Natural killer cell (primary cell): ENCODE measurements at regions of chr6 and their contacts with region 1.

Region 1: DNA sequence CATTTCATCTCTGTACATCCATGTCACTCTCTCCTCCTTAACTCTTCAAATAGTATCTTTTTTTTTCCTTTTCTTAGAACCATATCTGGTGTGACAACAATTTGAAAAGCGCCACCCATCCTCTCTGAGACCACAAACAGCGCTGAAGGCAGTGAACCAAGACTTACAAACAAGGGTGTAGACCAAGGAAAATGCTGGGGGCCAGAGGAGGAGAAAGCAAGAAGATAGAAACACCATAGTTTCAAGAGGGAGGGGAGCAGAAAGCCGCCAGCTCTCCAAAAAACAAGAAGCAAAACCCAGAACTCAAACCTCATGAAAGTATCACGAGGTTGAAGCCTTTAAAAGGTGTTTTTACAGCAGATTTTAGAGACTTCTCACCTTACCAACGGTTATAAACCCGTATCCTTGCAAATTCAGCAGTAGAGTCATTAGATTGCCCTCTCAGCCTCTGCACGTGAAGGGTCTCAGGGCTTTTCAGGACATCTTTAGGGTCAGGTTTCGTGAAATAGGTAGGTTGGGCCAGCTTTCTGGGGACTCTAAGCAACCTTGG is 13.3 kb upstream of the RIPOR2 start:
- DNase-seq: peak in 1 of 2 donors; percentile 81
- ATAC-seq: peak; percentile 53 to 68 (median 67)
- H3K4me3 ChIP-seq: no peak overlapping the region
- H3K4me3 Mint-ChIP-seq: peak overlapping the region; percentile 83
- H3K27ac ChIP-seq: peak overlapping the region; percentile 80
- H3K27ac Mint-ChIP-seq: peak overlapping the region; percentile 94
- H3K4me1 ChIP-seq: peaks cover 68% of the 10 kb centered on the region
- H3K4me1 Mint-ChIP-seq: peaks cover 76 to 84% of the 10 kb centered on the region in 2 donors
- H3K27me3 ChIP-seq: no peaks in the 10 kb centered on the region
- H3K27me3 Mint-ChIP-seq: no peaks in the 10 kb centered on the region
- CTCF ChIP-seq: no peak

Region 2: DNA sequence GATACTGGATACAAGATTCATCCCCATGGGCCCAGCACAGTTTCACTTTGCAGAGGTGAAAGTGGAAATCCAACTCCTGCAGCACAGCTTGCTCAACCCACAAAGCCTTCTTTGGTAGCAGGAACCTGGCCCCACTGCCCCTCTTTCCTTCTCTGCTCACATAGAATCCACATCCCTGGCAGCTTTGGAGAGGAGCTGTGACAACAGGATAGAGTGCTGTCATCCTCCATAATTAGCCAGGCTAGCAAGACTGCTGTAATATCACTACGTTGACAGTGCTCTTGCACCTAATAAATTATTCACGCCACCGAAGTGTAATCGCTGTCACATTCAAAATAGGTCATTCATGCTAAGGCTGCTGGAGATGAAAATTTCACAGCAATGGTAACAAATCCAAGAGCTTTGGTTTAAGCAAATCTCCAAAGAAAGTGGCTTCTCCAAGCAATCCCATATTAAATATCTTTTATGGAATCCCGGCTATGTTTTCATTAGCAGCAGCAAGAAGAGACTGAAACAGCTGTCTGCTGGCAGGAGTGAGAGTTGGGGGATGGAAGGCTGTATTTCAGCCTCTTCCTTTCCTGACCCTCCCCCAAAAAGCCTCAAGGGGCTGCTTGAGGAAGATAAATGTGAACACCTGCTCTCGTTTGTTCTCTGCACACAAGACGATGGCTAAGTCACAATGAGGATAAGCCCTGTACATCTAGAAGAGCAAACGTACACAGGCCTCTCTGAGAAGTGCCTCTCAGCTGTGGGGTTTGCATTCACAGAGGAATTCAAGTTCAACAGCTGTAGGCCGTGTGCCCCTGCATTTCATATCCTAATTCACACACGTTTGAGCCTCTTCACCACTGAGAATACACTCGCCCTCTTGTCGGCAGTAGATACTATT is 29.8 kb before region 1 on chr6:
- intact Hi-C with region 1: loop called (anchors 5 kb)
- DNase-seq: peak in 1 of 2 donors; percentile 46
- ATAC-seq: peak; percentile 59 to 69 (median 60)
- H3K4me3 ChIP-seq: no peak overlapping the region
- H3K4me3 Mint-ChIP-seq: peak overlapping the region; percentile 83
- H3K27ac ChIP-seq: peak overlapping the region; percentile 45
- H3K27ac Mint-ChIP-seq: peak overlapping the region; percentile 89 to 93
- H3K4me1 ChIP-seq: peaks cover 81% of the 10 kb centered on the region
- H3K4me1 Mint-ChIP-seq: peaks cover 85 to 88% of the 10 kb centered on the region in 2 donors
- H3K27me3 ChIP-seq: no peaks in the 10 kb centered on the region
- H3K27me3 Mint-ChIP-seq: no peaks in the 10 kb centered on the region
- CTCF ChIP-seq: no peak

Region 3: DNA sequence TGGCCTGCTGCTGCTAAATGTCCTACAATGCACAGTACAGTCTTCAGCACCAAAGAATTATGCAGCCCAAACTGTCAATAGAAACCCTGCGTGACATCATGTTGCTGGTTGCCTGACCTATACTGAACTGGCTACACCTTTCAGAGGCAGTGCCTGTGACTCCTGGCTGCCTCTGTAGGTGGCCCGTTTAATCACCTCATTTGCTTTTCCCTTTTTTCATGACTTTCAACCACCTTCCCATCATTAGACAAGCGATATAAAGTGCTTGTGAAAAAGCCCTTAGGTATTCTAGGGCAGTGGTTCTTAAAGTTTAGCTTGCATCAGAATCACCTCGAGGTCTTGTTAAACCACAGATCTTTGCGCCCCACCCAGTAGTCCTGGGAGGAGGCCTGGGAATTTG is 19.7 kb after region 1 on chr6:
- intact Hi-C with region 1: loop called (anchors 2 kb)
- DNase-seq: peak in 1 of 2 donors; percentile 38
- ATAC-seq: peak; percentile 73 to 83 (median 77)
- H3K4me3 ChIP-seq: no peak overlapping the region
- H3K4me3 Mint-ChIP-seq: peak overlapping the region; percentile 61
- H3K27ac ChIP-seq: peak overlapping the region; percentile 67
- H3K27ac Mint-ChIP-seq: peak overlapping the region; percentile 90 to 93
- H3K4me1 ChIP-seq: peaks cover 43% of the 10 kb centered on the region
- H3K4me1 Mint-ChIP-seq: peaks cover 74 to 92% of the 10 kb centered on the region in 2 donors
- H3K27me3 ChIP-seq: no peaks in the 10 kb centered on the region
- H3K27me3 Mint-ChIP-seq: no peaks in the 10 kb centered on the region
- CTCF ChIP-seq: no peak

Region 4: GRCh38 chr6:25006565-25007001 is 57.5 kb after region 1 on chr6:
- intact Hi-C with region 1: loop called (anchors 5 kb)
- DNase-seq: peak in 1 of 2 donors; percentile 62
- ATAC-seq: peak; percentile 21 to 78 (median 34)
- H3K4me3 ChIP-seq: no peak overlapping the region
- H3K4me3 Mint-ChIP-seq: peak overlapping the region; percentile 83
- H3K27ac ChIP-seq: peak overlapping the region; percentile 86
- H3K27ac Mint-ChIP-seq: peak overlapping the region; percentile 91 to 95
- H3K4me1 ChIP-seq: peaks cover 51% of the 10 kb centered on the region
- H3K4me1 Mint-ChIP-seq: peaks cover 74 to 81% of the 10 kb centered on the region in 2 donors
- H3K27me3 ChIP-seq: no peaks in the 10 kb centered on the region
- H3K27me3 Mint-ChIP-seq: no peaks in the 10 kb centered on the region
- CTCF ChIP-seq: no peak